RWPE1 (cell line): ENCODE measurements at regions of chr4 and their contacts with region 1.

Region 1: DNA sequence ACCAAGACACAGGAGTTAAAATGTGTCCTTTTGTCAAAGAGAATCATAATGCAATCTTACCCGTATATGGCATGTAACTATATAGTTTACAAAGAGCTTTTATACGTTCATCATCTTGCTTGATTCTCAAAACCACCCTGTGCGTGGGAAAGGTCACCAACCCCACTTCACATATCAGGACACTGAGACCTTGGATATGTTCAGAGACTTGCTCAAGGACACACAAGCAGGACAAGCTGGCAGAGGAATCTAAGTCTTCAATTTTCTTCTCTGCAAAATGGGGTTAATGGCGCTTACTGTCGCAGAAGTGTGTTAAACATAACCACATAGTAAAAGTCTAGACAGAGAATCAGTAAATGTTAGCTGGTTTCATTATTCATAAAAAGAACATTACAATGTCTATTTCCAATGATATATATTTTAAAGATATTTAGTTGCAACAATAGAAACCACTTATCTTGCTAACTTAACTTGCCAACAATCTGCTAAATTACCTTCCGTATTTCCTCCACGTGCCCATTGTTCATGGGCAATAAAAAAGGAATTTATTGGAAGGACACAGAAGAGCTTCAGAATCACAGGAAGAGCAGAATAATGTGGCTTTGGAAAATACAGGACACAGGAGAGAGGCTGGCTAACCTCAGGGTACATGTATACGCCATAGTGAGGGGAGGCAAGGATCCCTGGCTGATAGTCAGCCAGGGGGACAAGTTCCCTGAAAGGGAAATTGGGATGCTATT is 64.6 kb upstream of the TAPT1 start:
- DNase-seq: no peak
- H3K27ac ChIP-seq: no peak overlapping the region
- CTCF ChIP-seq: no peak

Region 2: DNA sequence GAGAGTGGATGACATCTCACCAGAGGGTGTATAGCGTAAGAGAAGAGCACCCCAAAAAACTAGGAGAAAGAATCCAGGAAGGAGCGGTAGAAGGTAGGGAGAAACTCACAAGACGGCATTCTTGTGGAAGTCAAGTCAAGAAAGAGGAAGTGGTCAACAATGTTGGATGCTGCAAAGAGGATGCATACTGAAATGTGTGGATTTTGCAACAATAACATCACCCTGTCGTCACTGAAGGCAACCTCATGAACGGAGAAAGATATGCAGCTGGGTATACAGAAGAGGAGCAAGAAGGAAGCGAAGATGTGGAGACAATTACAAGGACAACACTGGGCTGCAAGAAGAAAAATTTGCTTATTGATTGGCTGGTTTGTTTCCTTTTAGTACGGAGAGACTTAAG is 53.1 kb before region 1 on chr4:
- CTCF ChIA-PET with region 1: no interaction called
- POLR2A ChIA-PET with region 1: no interaction called
- DNase-seq: no peak
- H3K27ac ChIP-seq: no peak overlapping the region
- CTCF ChIP-seq: no peak

Region 3: DNA sequence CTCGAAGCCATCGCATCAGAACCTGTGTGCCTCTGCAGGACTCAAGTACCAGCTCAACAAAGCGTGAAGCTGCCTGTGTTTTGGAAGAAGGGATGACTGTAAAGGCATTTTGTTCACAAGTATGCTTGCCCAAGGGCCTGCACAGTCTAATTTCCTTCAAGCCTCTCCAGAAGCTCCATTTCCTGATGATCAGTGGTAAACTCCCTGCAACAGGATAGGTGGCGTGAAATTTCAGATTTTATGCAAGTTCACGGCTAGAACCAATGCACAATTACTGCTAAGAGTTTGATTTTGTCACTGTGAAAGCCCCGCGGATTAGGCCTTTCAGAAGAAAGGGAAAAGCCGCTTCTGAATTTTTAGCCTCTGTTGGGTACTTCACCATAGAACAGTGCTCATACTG is 24.6 kb after region 1 on chr4:
- CTCF ChIA-PET with region 1: interaction called, 10 read pairs
- POLR2A ChIA-PET with region 1: no interaction called
- DNase-seq: no peak
- H3K27ac ChIP-seq: no peak overlapping the region
- CTCF ChIP-seq: no peak